Activated CD4-positive, alpha-beta memory T cell treated with anti-CD3 and anti-CD28 coated beads, Interleukin-2, amount 10 ng/mL, durations not matched to agents 7 days and 5 days (primary cell): ENCODE measurements at regions of chr1 and their contacts with region 1.

Region 1: DNA sequence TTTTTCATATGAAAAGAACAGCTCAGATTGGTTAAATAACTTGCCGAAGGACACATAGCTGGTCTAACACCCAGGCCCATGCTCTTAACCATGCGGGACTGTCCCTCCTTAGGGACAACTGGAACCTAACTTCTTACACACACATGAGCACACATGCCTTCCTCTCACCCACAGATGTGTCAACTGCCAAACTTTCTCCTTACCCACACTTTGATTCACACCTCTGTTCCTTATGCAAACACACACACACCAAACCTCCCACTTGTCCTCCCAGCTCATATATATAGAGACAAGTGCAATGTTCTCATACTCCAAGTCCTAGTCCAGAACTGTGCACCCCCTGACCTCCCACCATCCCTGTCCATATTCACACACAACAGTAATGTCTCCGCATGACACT is 4.3 kb downstream of the RAB25 start:
- DNase-seq: no peak
- H3K4me3 Mint-ChIP-seq: no peak overlapping the region
- H3K27ac Mint-ChIP-seq: no peak overlapping the region
- H3K4me1 Mint-ChIP-seq: peaks cover 18% of the 10 kb centered on the region
- H3K27me3 Mint-ChIP-seq: no peaks in the 10 kb centered on the region

Region 2: DNA sequence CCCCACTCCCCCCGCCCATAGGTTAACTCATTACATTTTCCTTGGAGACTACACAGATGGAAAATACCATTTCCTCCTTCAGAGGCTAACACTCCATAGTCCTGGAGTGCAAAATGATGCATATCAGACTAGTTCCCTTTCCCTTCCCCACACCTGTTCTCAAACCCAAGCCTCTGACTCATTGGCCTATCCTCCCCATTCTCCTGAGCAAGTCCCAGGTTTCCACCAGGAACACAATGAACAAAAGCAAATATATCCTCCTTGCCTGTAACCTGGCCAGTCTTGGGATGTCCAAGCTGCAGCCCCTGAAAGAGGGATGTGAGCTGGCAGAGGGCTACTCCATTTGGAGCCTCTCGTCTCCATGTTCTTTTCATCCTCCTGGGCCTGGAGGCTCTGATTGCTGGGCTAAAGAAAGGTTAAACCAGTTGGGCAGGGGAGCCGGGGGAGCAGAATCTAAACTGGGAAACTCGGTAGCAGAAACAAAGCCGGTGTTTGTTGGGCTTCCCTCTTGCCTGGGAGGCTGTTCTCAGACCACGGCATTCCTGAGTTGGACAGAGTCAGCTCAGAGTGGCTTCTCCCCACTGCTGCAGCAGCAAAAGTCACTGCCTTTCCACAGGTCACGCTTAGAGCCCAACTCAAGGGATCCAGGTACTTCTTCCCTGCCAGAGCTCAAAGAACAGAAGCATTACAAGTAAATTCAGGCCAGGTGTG is 58.4 kb before region 1 on chr1:
- CTCF ChIA-PET with region 1: interaction called, 11 read pairs
- POLR2A ChIA-PET with region 1: interaction called, 3 read pairs
- DNase-seq: no peak
- H3K4me3 Mint-ChIP-seq: no peak overlapping the region
- H3K27ac Mint-ChIP-seq: no peak overlapping the region
- H3K4me1 Mint-ChIP-seq: peaks cover 36% of the 10 kb centered on the region
- H3K27me3 Mint-ChIP-seq: peaks cover 2% of the 10 kb centered on the region

Region 3: DNA sequence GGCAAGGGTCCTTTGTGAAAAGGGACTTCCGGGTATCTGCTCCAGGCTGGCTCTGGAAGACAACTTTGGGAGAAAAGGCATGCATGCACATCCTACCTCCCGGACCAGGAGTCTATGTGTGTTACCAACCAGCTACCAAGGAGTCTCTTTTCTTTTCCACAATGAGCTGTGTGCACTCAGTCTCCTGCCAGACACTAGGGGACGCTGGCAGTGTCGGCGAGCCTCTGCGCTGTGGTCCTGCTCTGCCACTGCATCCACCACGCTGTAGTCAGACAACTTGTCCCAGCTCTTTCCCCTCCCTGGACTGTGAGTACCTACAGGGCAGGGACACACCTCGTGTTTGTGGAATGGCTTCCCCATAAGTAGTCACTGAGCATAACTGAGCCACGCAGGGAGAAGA is 39.3 kb before region 1 on chr1:
- CTCF ChIA-PET with region 1: interaction called, 24 read pairs
- POLR2A ChIA-PET with region 1: no interaction called
- DNase-seq: peak; percentile 49
- H3K4me3 Mint-ChIP-seq: no peak overlapping the region
- H3K27ac Mint-ChIP-seq: no peak overlapping the region
- H3K4me1 Mint-ChIP-seq: peaks cover 18% of the 10 kb centered on the region
- H3K27me3 Mint-ChIP-seq: peaks cover 4% of the 10 kb centered on the region